ENCODE measurements at regions of chr1 and their contacts with region 1.

Region 1: GRCh38 chr1:203871107-203871875 is 9.9 kb downstream of the SNRPE start:
- DNase-seq: peak; percentile 88
- ATAC-seq: peak; percentile 88
- H3K4me3 ChIP-seq: no peak overlapping the region
- H3K27ac ChIP-seq: no peak overlapping the region
- H3K4me1 ChIP-seq: peaks cover 13% of the 10 kb centered on the region
- H3K27me3 ChIP-seq: no peaks in the 10 kb centered on the region
- CTCF ChIP-seq: peak; percentile 99

Region 2: GRCh38 chr1:203663294-203663693 is 208.0 kb before region 1 on chr1:
- CTCF ChIA-PET with region 1: no interaction called
- POLR2A ChIA-PET with region 1: no interaction called
- intact Hi-C with region 1: no loop called
- DNase-seq: peak; percentile 99
- ATAC-seq: peak; percentile 98
- H3K4me3 ChIP-seq: peak overlapping the region; percentile 31; the same call in 1 of the 2 replicates
- H3K27ac ChIP-seq: peak overlapping the region; percentile 95
- H3K4me1 ChIP-seq: peaks cover 36% of the 10 kb centered on the region
- H3K27me3 ChIP-seq: no peaks in the 10 kb centered on the region
- CTCF ChIP-seq: 0 out of 2 replicates have a peak, but pooled peaks have one; percentile 29

Region 3: GRCh38 chr1:203906932-203907331 is 35.6 kb after region 1 on chr1:
- CTCF ChIA-PET with region 1: interaction called, 3 read pairs
- POLR2A ChIA-PET with region 1: no interaction called
- intact Hi-C with region 1: loop called (anchors 2 kb)
- DNase-seq: peak; percentile 97
- ATAC-seq: peak; percentile 100
- H3K4me3 ChIP-seq: no peak overlapping the region
- H3K27ac ChIP-seq: peak overlapping the region; percentile 54
- H3K4me1 ChIP-seq: peaks cover 27% of the 10 kb centered on the region
- H3K27me3 ChIP-seq: no peaks in the 10 kb centered on the region
- CTCF ChIP-seq: no peak

Region 4: GRCh38 chr1:204059970-204060369 is 188.7 kb after region 1 on chr1:
- CTCF ChIA-PET with region 1: interaction called, 3 read pairs
- POLR2A ChIA-PET with region 1: no interaction called
- intact Hi-C with region 1: loop called (anchors 5 kb)
- DNase-seq: no peak
- ATAC-seq: no peak
- H3K4me3 ChIP-seq: no peak overlapping the region
- H3K27ac ChIP-seq: no peak overlapping the region
- H3K4me1 ChIP-seq: peaks cover 32% of the 10 kb centered on the region
- H3K27me3 ChIP-seq: no peaks in the 10 kb centered on the region
- CTCF ChIP-seq: no peak

Region 5: GRCh38 chr1:204072931-204073836 is 201.9 kb after region 1 on chr1 and contains the start of gene SOX13:
- CTCF ChIA-PET with region 1: interaction called, 5 read pairs
- POLR2A ChIA-PET with region 1: no interaction called
- intact Hi-C with region 1: loop called (anchors 1 kb)
- DNase-seq: peak; percentile 89
- ATAC-seq: peak; percentile 78
- H3K4me3 ChIP-seq: peak within 1 kb of the TSS; percentile 88
- H3K27ac ChIP-seq: peak within 1 kb of the TSS; percentile 57
- H3K4me1 ChIP-seq: peaks cover 27% of the 10 kb centered on the region
- H3K27me3 ChIP-seq: no peaks in the 10 kb centered on the region
- CTCF ChIP-seq: peak; percentile 32
- total RNA-seq, gene SOX13: 81.9 and 93.1 TPM in 2 replicates